ENCODE measurements at regions of chr2 and their contacts with region 1.

Region 1: GRCh38 chr2:27807476-27807875 is 36.0 kb downstream of the MRPL33 start:
- DNase-seq: peak; percentile 61
- H3K4me3 Mint-ChIP-seq: no peak overlapping the region
- H3K27ac Mint-ChIP-seq: no peak overlapping the region
- H3K4me1 Mint-ChIP-seq: peaks cover 28% of the 10 kb centered on the region
- H3K27me3 Mint-ChIP-seq: no peaks in the 10 kb centered on the region
- CTCF ChIP-seq: peak; percentile 59

Region 2: GRCh38 chr2:27888790-27889189 is 81.3 kb after region 1 on chr2:
- CTCF ChIA-PET with region 1: no interaction called
- intact Hi-C with region 1: loop called (anchors 2 kb)
- DNase-seq: no peak
- H3K4me3 Mint-ChIP-seq: peak overlapping the region; percentile 98
- H3K27ac Mint-ChIP-seq: peak overlapping the region; percentile 97
- H3K4me1 Mint-ChIP-seq: peaks cover 31% of the 10 kb centered on the region
- H3K27me3 Mint-ChIP-seq: no peaks in the 10 kb centered on the region
- CTCF ChIP-seq: no peak

Measured in Calu3 (cell line).